ENCODE measurements at regions of chr21 and their contacts with region 1.

Region 1: DNA sequence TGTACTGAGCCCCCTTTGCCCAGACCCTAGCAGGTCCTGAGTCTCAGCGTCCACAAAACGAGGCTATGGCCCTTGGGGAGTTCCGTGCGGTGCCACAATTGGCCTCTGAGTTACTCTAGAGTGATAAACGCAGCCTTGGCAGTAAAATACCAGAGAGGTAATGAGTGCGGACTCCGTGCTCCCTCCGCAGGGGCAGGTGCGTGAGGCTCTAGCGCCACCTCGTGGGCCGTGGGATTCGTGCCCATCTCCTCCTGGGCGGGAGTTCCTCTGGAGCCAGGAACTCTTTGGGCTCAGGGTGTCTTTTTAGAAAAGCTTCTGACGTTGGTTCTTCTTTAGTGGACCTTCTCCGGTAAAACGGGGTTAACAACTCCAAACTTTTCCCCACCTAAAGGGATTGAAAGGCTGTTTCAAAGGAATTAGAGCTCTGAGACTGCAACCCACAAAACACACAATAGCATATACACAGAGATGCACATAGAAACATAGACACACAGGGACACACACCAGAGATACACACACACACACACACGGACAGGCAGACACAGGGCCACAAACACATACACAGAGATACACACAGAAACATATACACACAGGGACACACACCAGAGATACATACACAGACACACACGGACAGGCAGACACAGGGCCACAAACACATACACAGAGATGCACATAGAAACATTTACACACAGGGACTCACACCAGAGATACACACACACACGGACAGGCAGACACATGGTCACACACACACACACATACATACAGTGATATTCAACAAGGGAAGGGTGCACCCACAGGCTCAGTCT is 99.4 kb downstream of the KCNJ15 start:
- DNase-seq: peak; percentile 64
- H3K4me3 ChIP-seq: no peak overlapping the region
- H3K27ac ChIP-seq: no peak overlapping the region
- H3K4me1 ChIP-seq: peaks cover 10% of the 10 kb centered on the region
- H3K27me3 ChIP-seq: no peaks in the 10 kb centered on the region
- CTCF ChIP-seq: peak; percentile 90 to 99

Region 2: DNA sequence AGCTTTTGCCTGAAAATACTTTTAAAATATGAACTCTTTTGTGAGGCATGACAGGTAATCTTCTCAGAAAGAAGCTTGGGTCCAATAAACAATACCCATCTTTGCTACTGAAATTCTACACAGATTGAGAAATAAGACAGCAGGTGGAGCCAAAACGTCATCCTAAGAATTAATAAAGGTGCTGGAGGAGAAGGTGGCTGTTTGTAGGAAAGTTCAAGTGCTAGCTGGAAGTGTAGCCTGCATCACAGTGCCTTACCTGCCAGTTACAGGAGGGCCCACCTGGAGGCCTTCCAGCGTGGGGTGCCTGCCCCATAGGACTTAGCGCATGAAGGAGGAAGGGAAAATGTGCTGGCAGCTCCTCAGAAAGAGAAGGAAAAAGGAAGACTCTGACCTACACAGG is 1189.5 kb before region 1 on chr21:
- CTCF ChIA-PET with region 1: no interaction called
- dilution Hi-C with region 1: no loop called
- in situ Hi-C with region 1: no loop called
- intact Hi-C with region 1: loop called (anchors 2 kb)
- DNase-seq: peak; percentile 21
- H3K4me3 ChIP-seq: no peak overlapping the region
- H3K27ac ChIP-seq: no peak overlapping the region
- H3K4me1 ChIP-seq: no peaks in the 10 kb centered on the region
- H3K27me3 ChIP-seq: no peaks in the 10 kb centered on the region
- CTCF ChIP-seq: peak; percentile 15 to 32

Region 3: GRCh38 chr21:37758982-37759381 is 597.2 kb before region 1 on chr21:
- CTCF ChIA-PET with region 1: no interaction called
- dilution Hi-C with region 1: no loop called
- in situ Hi-C with region 1: no loop called
- intact Hi-C with region 1: loop called (anchors 1 kb)
- DNase-seq: peak; percentile 37
- H3K4me3 ChIP-seq: no peak overlapping the region
- H3K27ac ChIP-seq: no peak overlapping the region
- H3K4me1 ChIP-seq: no peaks in the 10 kb centered on the region
- H3K27me3 ChIP-seq: peaks cover 3% of the 10 kb centered on the region
- CTCF ChIP-seq: peak; percentile 40 to 72

Region 4: GRCh38 chr21:38170280-38170679 is 185.9 kb before region 1 on chr21:
- CTCF ChIA-PET with region 1: interaction called, 19 read pairs
- dilution Hi-C with region 1: loop called (anchors 5 kb)
- in situ Hi-C with region 1: loop called in 1 of 2 experiments (anchors 5 kb)
- intact Hi-C with region 1: loop called (anchors 1 kb)
- DNase-seq: peak; percentile 43
- H3K4me3 ChIP-seq: no peak overlapping the region
- H3K27ac ChIP-seq: no peak overlapping the region
- H3K4me1 ChIP-seq: peaks cover 9% of the 10 kb centered on the region
- H3K27me3 ChIP-seq: no peaks in the 10 kb centered on the region
- CTCF ChIP-seq: peak; percentile 73 to 79

Region 5: DNA sequence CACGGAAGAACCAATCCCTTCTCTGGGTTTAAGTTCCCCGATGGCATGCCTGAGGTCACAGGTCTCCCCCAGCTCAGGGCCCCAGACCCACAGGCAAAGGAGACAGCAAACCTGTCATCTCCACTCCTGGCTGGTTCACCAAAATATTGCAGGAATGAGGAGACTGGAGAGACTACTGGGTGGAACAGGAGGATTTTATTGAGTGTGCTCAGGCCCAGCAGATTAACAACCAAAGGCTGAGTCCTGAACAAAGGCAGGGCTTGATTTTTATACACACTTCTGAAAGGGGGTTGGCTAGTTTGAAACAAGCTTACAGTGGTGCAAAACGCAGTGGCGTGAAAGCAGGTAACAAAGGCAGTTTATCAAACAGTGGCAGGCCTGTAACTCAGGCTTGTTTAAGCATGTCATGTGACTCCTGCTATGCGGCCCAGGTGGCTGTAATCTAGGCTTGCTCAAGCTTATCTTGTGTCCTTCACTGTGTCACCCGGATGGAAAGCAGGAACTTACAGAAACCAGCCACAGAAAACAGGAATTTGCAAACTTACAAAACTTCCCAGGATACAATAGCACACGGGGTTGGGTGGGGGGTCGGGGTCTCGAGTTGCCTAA is 126.8 kb before region 1 on chr21:
- CTCF ChIA-PET with region 1: interaction called, 5 read pairs
- dilution Hi-C with region 1: no loop called
- in situ Hi-C with region 1: no loop called
- intact Hi-C with region 1: loop called (anchors 1 kb)
- DNase-seq: peak; percentile 20
- H3K4me3 ChIP-seq: no peak overlapping the region
- H3K27ac ChIP-seq: no peak overlapping the region
- H3K4me1 ChIP-seq: peaks cover 14% of the 10 kb centered on the region
- H3K27me3 ChIP-seq: no peaks in the 10 kb centered on the region
- CTCF ChIP-seq: no peak

Region 6: DNA sequence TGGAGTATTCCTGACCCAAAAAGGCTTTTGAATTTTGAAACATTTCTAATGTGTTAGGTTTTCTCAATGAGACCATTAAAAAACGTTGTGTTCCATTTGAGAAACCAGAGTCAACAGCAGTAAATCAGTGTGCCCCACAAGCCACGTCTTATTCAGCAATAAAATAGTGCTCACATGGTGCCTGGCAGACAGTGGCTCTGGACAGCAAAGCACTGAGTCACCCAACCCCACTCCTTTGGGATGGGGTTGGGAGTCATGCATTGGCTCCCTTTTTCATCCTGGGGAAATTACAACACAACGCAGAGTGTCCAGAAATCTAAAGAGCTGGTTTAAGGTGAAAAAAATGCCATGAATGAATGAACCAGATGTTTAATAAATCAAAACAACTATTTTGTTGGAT is 52.9 kb before region 1 on chr21:
- CTCF ChIA-PET with region 1: no interaction called
- dilution Hi-C with region 1: no loop called
- in situ Hi-C with region 1: no loop called
- intact Hi-C with region 1: loop called (anchors 1 kb)
- DNase-seq: peak; percentile 90
- H3K4me3 ChIP-seq: no peak overlapping the region
- H3K27ac ChIP-seq: peak overlapping the region; percentile 53
- H3K4me1 ChIP-seq: peaks cover 13% of the 10 kb centered on the region
- H3K27me3 ChIP-seq: no peaks in the 10 kb centered on the region
- CTCF ChIP-seq: no peak

Measured in mammary epithelial cell (primary cell).